ENCODE measurements at regions of chr12 and their contacts with region 1.

Region 1: DNA sequence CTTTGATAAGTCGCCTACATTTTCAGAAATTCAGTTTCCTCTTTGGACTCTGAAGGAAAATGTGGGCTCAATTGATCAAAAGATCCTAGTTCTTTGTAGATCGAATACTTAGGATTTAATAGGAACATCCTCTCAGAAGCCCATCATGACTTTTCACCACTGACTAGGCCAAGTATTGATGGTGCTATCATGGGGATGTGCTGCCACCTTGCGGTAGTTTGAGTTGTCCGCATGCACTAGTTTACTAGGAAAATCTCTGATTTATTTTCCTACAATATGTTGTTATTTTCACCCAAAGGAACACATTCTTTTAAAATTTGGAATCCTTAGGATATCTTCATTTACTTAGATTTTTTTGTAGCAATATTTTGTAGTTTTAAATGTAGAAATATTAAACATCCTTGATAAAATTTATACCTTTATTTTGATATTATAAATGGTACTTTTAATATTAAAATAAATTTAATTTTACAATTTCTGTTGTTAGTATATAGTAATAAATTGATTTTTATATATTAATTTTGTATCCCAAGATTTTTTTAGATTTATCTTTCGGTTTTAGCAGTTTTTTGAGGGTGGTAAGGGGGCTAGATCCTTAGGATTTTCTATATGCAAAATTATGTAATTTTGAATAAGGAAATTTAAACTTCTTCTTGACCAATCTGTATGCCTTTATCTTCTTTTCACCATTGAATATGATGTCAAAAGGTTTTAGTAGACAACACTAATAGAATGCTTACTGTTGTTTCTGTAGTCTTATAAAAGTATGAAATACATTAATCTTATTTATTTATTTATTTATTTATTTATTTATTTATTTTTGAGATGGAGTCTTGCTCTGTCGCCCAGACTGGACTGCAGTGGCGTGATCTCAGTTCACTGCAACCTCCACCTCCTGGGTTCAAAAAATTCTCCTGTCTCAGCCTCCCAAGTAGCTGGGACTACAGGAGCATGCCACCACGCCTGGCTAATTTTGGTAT is 52.9 kb upstream of the OR9K2 start:
- DNase-seq: peak; percentile 84
- H3K4me3 Mint-ChIP-seq: no peak overlapping the region
- H3K27ac Mint-ChIP-seq: no peak overlapping the region
- H3K4me1 Mint-ChIP-seq: peaks cover 4% of the 10 kb centered on the region
- H3K27me3 Mint-ChIP-seq: peaks cover 21% of the 10 kb centered on the region

Region 2: DNA sequence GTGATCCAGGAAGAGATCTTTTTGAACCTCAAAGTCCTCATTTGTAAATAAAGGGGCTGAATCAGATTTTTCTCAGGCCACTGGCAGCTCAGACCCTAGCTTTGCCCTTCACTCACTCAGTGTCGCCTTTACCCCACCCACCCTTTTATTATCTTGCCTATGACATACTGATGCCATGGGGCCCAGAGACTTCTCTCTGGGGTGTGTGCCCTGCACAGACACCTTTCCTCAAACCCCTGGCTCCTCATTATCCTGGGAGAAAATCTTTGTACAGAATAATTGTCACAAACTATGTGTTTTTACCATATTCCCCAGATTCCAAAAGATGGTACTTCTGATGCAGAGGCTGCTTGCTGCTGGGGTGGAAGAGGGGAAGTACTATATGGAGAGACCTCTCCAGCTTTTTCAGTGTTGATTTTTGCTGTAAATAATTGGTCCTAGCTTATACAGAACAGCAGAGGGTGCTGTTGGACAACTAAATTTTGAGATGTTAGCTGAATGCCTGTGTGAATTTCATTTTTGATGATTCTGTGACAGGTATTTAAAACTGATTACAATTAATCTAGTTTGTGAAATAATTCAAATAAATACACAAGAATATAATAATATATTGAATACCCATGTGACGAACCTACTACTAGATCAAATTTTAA is 371.3 kb before region 1 on chr12:
- CTCF ChIA-PET with region 1: interaction called, 64 read pairs
- POLR2A ChIA-PET with region 1: no interaction called
- intact Hi-C with region 1: loop called (anchors 1 kb)
- DNase-seq: no peak
- H3K4me3 Mint-ChIP-seq: no peak overlapping the region
- H3K27ac Mint-ChIP-seq: no peak overlapping the region
- H3K4me1 Mint-ChIP-seq: no peaks in the 10 kb centered on the region
- H3K27me3 Mint-ChIP-seq: peaks cover 4% of the 10 kb centered on the region

Region 3: DNA sequence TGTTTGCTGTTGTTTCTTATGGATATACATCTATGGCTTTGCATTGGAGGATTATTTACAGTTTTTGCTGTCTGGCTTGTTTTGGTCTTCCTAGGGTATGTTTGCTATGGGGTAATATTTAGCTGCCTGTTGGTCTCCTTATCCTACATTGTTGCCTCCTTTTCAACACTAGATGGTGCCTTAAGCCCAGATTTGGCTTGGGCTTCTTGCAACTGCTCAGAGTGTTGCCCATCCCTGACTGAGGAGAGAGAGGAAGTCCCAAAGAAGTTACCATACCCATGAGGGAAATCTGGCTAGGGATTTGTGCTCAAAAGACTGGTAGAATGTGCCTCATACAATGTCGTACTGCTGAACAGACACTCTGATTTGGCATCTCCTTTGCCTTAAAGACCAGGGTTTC is 313.6 kb before region 1 on chr12:
- CTCF ChIA-PET with region 1: interaction called, 18 read pairs
- POLR2A ChIA-PET with region 1: no interaction called
- intact Hi-C with region 1: no loop called
- DNase-seq: no peak
- H3K4me3 Mint-ChIP-seq: no peak overlapping the region
- H3K27ac Mint-ChIP-seq: no peak overlapping the region
- H3K4me1 Mint-ChIP-seq: peaks cover 6% of the 10 kb centered on the region
- H3K27me3 Mint-ChIP-seq: no peaks in the 10 kb centered on the region

Region 4: DNA sequence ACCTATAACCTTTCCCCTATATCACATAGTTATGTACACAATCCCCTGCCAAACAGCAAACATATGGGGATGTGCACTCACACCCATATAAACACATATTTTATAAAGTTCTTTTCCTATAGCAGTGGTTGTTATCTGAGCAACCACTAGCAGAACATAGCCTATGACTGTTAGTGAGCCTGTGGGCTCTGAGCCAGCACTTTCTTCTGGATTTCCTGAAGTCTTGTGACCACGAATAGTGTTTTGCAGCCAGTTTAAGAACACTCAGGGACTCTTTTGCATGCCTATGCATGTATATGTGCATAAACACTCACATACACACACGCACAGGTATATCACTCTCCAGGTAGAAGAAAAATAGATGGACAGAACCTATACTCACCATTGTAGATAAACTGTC is 105.9 kb before region 1 on chr12:
- CTCF ChIA-PET with region 1: interaction called, 11 read pairs
- POLR2A ChIA-PET with region 1: no interaction called
- intact Hi-C with region 1: no loop called
- DNase-seq: peak; percentile 24
- H3K4me3 Mint-ChIP-seq: no peak overlapping the region
- H3K27ac Mint-ChIP-seq: peak overlapping the region; percentile 60
- H3K4me1 Mint-ChIP-seq: peaks cover 73% of the 10 kb centered on the region
- H3K27me3 Mint-ChIP-seq: no peaks in the 10 kb centered on the region

Region 5: DNA sequence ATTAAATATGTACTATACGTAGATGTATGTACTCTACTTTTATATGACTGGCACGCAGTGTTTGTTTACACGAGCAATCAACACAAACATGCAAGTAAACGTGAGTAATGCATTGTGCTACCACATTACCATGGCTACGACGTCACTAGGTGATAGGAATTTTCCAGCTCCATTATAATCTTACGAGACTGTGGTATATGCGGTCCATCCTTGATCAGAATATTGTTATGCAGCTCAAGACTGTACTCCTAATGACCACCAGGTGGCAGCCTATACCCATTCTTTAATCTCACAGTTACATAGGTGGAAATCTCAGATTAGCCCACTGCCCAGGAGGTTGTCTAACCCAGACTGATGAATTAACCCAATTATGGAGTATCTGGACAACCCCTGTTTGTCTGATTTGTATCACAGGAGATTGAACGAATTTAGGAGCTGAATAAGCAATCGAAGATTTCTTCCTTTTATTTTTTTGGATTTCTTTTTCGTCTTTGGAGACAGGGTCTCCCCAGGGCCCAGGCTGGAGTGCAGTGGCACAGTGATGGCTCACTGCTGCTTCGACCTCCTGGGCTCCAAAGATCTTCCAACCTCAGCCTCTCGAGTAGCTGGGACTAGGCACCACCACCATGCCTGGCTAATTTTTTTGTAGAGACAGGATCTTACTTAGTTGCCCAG is 80.0 kb before region 1 on chr12:
- CTCF ChIA-PET with region 1: interaction called, 697 read pairs
- POLR2A ChIA-PET with region 1: interaction called, 3 read pairs
- intact Hi-C with region 1: loop called (anchors 1 kb)
- DNase-seq: peak; percentile 57
- H3K4me3 Mint-ChIP-seq: no peak overlapping the region
- H3K27ac Mint-ChIP-seq: no peak overlapping the region
- H3K4me1 Mint-ChIP-seq: peaks cover 43% of the 10 kb centered on the region
- H3K27me3 Mint-ChIP-seq: no peaks in the 10 kb centered on the region

Region 6: GRCh38 chr12:55037351-55037987 is 35.9 kb before region 1 on chr12:
- CTCF ChIA-PET with region 1: interaction called, 11 read pairs
- POLR2A ChIA-PET with region 1: no interaction called
- intact Hi-C with region 1: no loop called
- DNase-seq: no peak
- H3K4me3 Mint-ChIP-seq: no peak overlapping the region
- H3K27ac Mint-ChIP-seq: no peak overlapping the region
- H3K4me1 Mint-ChIP-seq: peaks cover 27% of the 10 kb centered on the region
- H3K27me3 Mint-ChIP-seq: peaks cover 2% of the 10 kb centered on the region

Region 7: DNA sequence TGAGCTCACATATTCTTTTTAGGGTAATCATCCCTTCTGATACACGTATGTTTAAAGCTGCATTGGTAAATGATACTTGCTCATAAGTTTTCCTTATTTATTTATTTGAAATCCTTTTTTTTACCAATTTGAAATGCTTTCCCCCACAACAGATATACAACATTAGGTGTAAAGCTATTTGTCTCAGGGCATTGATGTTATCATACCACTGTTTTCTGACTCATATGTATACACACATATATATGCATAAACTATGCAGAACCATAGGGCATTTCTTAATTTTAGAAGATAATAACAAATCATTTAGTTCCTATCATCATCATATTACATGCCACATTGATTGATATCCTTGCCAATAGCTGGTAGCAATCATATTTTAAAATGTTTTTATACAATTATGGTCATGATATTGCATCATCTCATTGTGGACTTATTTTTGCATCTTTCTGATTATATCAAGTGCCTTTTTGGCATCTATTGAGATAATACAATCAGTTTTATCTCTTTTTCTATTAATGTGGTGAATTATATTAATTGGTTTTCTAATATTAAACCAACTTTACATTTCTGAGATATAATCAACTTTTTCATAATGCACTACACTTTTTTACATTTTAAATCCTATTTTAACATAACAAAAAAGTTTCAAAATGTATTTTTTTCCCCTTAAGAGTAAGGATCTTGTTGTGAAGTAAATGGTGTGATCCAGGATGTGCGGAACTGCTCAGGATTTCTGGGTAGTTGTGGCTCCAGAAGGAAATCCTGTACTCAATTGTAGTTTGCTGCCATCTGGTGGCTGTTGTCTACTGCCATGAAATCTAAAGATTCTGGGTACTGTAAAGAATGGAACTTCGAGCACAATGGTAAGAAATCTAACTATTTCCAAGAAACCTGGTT is 69.6 kb after region 1 on chr12:
- CTCF ChIA-PET with region 1: interaction called, 9 read pairs
- POLR2A ChIA-PET with region 1: no interaction called
- intact Hi-C with region 1: loop called (anchors 5 kb)
- DNase-seq: peak; percentile 41
- H3K4me3 Mint-ChIP-seq: no peak overlapping the region
- H3K27ac Mint-ChIP-seq: no peak overlapping the region
- H3K4me1 Mint-ChIP-seq: peaks cover 5% of the 10 kb centered on the region
- H3K27me3 Mint-ChIP-seq: no peaks in the 10 kb centered on the region